CD4-positive, alpha-beta T cell (primary cell): ENCODE measurements at regions of chr7 and their contacts with region 1.

Region 1: GRCh38 chr7:54773472-54774399 is 14.7 kb upstream of the SEC61G start:
- DNase-seq: peak; percentile 43 to 80 (median 56)
- ATAC-seq: peak; percentile 97
- H3K4me3 ChIP-seq: peak overlapping the region; percentile 40
- H3K4me3 Mint-ChIP-seq: peak overlapping the region; percentile 86
- H3K27ac ChIP-seq: no peak overlapping the region
- H3K27ac Mint-ChIP-seq: peak overlapping the region; percentile 74
- H3K4me1 ChIP-seq: no peaks in the 10 kb centered on the region
- H3K4me1 Mint-ChIP-seq: peaks cover 7% of the 10 kb centered on the region
- H3K27me3 ChIP-seq: peaks cover 0 to 14% of the 10 kb centered on the region in 2 experiments
- H3K27me3 Mint-ChIP-seq: peaks cover 46% of the 10 kb centered on the region
- CTCF ChIP-seq: peak; percentile 82

Region 2: GRCh38 chr7:54758702-54759592 is 14.8 kb before region 1 on chr7 and contains the start of gene SEC61G:
- CTCF ChIA-PET with region 1: interaction called, 16 read pairs
- POLR2A ChIA-PET with region 1: interaction called, 16 read pairs
- intact Hi-C with region 1: no loop called
- DNase-seq: peak; percentile 91 to 98 (median 93)
- ATAC-seq: peak; percentile 97
- H3K4me3 ChIP-seq: peak within 1 kb of the TSS; percentile 69
- H3K4me3 Mint-ChIP-seq: peak within 1 kb of the TSS; percentile 96
- H3K27ac ChIP-seq: peak within 1 kb of the TSS; percentile 63 to 73
- H3K27ac Mint-ChIP-seq: peak within 1 kb of the TSS; percentile 95
- H3K4me1 ChIP-seq: peaks cover 21% of the 10 kb centered on the region
- H3K4me1 Mint-ChIP-seq: peaks cover 54% of the 10 kb centered on the region
- H3K27me3 ChIP-seq: no peaks in the 10 kb centered on the region
- H3K27me3 Mint-ChIP-seq: no peaks in the 10 kb centered on the region
- CTCF ChIP-seq: no peak
- total RNA-seq, gene SEC61G: 43.9 to 51.3 TPM

Region 3: GRCh38 chr7:55255496-55256435 is 482.0 kb after region 1 on chr7:
- CTCF ChIA-PET with region 1: interaction called, 9 read pairs
- POLR2A ChIA-PET with region 1: no interaction called
- intact Hi-C with region 1: loop called (anchors 1 to 2 kb)
- DNase-seq: peak; percentile 28 to 82 (median 62)
- ATAC-seq: peak; percentile 91
- H3K4me3 ChIP-seq: peak overlapping the region; percentile 55
- H3K4me3 Mint-ChIP-seq: peak overlapping the region; percentile 93
- H3K27ac ChIP-seq: no peak overlapping the region
- H3K27ac Mint-ChIP-seq: no peak overlapping the region
- H3K4me1 ChIP-seq: peaks cover 18% of the 10 kb centered on the region
- H3K4me1 Mint-ChIP-seq: peaks cover 8% of the 10 kb centered on the region
- H3K27me3 ChIP-seq: peaks cover 29 to 38% of the 10 kb centered on the region in 2 experiments
- H3K27me3 Mint-ChIP-seq: peaks cover 60% of the 10 kb centered on the region
- CTCF ChIP-seq: no peak

Region 4: GRCh38 chr7:55415173-55415778 is 641.5 kb after region 1 on chr7:
- CTCF ChIA-PET with region 1: interaction called, 3 read pairs
- POLR2A ChIA-PET with region 1: no interaction called
- intact Hi-C with region 1: loop called (anchors 2 to 10 kb)
- DNase-seq: peak; percentile 62 to 88 (median 78)
- ATAC-seq: peak; percentile 99
- H3K4me3 ChIP-seq: no peak overlapping the region
- H3K4me3 Mint-ChIP-seq: no peak overlapping the region
- H3K27ac ChIP-seq: no peak overlapping the region
- H3K27ac Mint-ChIP-seq: no peak overlapping the region
- H3K4me1 ChIP-seq: no peaks in the 10 kb centered on the region
- H3K4me1 Mint-ChIP-seq: no peaks in the 10 kb centered on the region
- H3K27me3 ChIP-seq: no peaks in the 10 kb centered on the region
- H3K27me3 Mint-ChIP-seq: no peaks in the 10 kb centered on the region
- CTCF ChIP-seq: peak; percentile 95

Region 5: GRCh38 chr7:55887821-55888247 is 1114.1 kb after region 1 on chr7:
- CTCF ChIA-PET with region 1: no interaction called
- POLR2A ChIA-PET with region 1: no interaction called
- intact Hi-C with region 1: loop called in 1 of 2 experiments (anchors 10 kb)
- DNase-seq: peak in 1 of 14 experiments; percentile 1
- ATAC-seq: peak; percentile 12
- H3K4me3 ChIP-seq: peak overlapping the region; percentile 60
- H3K4me3 Mint-ChIP-seq: peak overlapping the region; percentile 90
- H3K27ac ChIP-seq: no peak overlapping the region
- H3K27ac Mint-ChIP-seq: peak overlapping the region; percentile 90
- H3K4me1 ChIP-seq: peaks cover 13% of the 10 kb centered on the region
- H3K4me1 Mint-ChIP-seq: peaks cover 6% of the 10 kb centered on the region
- H3K27me3 ChIP-seq: no peaks in the 10 kb centered on the region
- H3K27me3 Mint-ChIP-seq: no peaks in the 10 kb centered on the region
- CTCF ChIP-seq: no peak